ENCODE measurements at regions of chr14 and their contacts with region 1.

Region 1: DNA sequence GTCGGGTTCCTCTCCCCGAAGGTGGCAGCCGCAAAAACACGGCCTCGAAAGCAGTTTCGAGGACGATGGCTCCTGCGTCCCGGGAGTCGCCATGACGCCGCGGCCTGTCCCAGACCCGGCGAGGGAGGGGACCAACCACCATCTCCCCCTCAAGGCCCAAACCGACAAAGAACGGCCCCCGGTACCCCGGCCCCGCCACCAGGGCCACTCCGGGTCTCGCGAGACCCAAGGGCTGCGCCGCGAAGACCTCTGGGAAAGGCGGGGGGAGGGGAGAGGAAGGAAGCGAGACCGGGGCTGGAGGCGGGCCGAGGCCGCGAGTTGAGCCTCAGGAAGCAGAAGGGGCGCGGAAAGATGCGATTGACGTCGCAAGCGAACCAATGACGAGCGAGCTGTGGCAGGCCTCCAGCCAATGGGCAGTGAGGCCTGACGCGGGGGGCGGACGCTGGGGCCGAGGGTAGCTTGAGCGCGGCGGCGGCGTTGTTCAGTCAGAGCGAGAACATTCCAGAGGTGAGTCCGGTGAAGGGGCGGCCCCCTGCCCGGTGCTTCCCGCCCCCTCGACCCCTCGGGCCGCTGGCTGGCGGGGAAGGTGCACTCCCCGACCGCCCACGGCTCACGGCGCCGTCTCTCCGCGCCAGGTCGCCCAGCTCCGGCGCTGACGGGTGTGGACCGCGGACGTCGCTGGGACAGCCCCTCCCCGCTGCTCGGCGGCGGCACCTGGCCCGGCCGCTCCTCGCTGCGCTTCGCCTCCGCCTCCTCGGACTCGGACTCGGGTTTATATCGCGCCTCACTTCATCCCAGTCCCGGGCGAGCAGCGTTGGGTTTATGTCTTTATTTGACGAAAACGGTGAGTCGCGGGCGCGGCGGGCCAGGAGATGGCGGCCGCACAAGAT is at the start of gene EIF5:
- DNase-seq: peak; percentile 99
- ATAC-seq: peak; percentile 95
- H3K4me3 Mint-ChIP-seq: peak within 1 kb of the TSS; percentile 82
- H3K27ac Mint-ChIP-seq: peak within 1 kb of the TSS; percentile 97
- H3K4me1 Mint-ChIP-seq: peaks cover 36% of the 10 kb centered on the region
- H3K27me3 Mint-ChIP-seq: peaks cover 2% of the 10 kb centered on the region
- total RNA-seq, gene EIF5: 240 to 241 TPM

Region 2: GRCh38 chr14:103343905-103344797 is 10.2 kb after region 1 on chr14:
- CTCF ChIA-PET with region 1: interaction called, 8 read pairs
- POLR2A ChIA-PET with region 1: interaction called, 11 read pairs
- DNase-seq: no peak
- ATAC-seq: no peak
- H3K4me3 Mint-ChIP-seq: no peak overlapping the region
- H3K27ac Mint-ChIP-seq: no peak overlapping the region
- H3K4me1 Mint-ChIP-seq: peaks cover 2% of the 10 kb centered on the region
- H3K27me3 Mint-ChIP-seq: no peaks in the 10 kb centered on the region

Region 3: GRCh38 chr14:103385152-103385993 is 51.4 kb after region 1 on chr14 and contains the start of gene MARK3:
- CTCF ChIA-PET with region 1: interaction called, 24 read pairs
- POLR2A ChIA-PET with region 1: interaction called, 12 read pairs
- DNase-seq: peak; percentile 97
- ATAC-seq: peak; percentile 91
- H3K4me3 Mint-ChIP-seq: peak within 1 kb of the TSS; percentile 98
- H3K27ac Mint-ChIP-seq: peak within 1 kb of the TSS; percentile 97
- H3K4me1 Mint-ChIP-seq: peaks cover 35% of the 10 kb centered on the region
- H3K27me3 Mint-ChIP-seq: peaks cover 8% of the 10 kb centered on the region
- total RNA-seq, gene MARK3: 76.8 to 86.7 TPM

Measured in activated CD8-positive, alpha-beta T cell treated with anti-CD3 and anti-CD28 coated beads, Interleukin-2, amount 10 ng/mL, durations not matched to agents 7 days and 5 days (primary cell).